Left ventricle myocardium superior (tissue), 1 donor: ENCODE measurements at regions of chr1 and their contacts with region 1.

Region 1: DNA sequence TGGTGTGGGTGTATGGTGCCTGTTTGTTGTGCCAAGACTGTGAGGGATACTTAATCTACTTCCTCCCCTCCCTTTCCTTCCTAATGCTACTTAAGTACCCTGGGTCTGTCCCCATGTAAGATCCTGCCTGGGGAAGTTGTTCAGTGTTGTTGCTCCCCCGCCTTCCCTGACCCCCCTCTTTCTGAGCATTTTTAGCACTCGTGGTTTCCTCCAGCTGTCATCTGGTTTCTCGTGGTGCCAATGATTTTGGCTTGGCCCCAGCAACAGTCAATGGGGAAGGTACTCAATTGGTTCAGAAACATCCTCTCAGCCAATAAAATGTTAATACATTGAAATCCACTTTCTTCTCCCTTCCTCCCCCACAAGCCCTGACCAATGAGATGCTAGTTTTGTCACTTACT is 8.0 kb upstream of the B4GALT3 start:
- DNase-seq: peak; percentile 73
- ATAC-seq: peak; percentile 86

Region 2: DNA sequence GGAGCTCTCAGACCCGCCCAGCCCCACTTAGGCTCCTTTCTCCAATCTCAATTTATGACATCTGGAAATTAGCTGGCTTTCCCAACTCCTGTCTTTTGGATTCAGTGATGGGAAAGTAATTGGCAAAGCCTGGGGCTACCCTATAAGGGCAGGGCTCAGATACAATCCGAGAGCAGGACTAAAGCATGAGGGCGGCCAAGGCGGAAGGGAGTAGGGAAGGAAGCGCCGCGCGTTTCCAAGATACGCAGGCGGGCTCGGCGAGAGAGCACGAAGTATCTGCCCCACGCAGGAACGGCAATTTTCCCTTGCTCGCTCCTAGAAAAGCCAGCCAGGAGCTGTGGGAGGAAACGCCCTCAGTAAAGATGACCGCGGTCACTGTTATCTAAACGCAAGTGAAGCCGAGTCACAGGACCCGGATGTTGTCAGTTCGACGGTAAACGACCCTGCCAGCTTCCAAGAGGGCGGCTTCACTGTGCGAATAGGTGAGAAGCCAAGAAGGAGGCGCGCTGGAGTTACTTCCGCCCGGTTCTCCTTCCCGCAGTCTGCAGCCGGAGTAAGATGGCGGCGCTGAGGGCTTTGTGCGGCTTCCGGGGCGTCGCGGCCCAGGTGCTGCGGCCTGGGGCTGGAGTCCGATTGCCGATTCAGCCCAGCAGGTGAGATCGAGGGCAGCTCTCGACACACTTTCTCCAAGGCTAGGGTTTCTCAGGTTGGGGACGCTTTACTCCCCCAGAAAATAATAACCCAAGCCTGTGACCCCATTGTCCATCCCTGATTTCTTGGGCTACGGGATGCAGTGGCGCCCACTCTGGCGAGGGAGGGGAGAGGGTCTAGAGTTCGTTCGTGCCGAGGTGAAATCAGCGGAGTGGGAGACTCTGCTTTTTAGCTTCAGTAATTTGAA is 16.8 kb after region 1 on chr1 and contains the start of gene NDUFS2:
- intact Hi-C with region 1: loop called (anchors 2 kb)
- DNase-seq: peak; percentile 97
- ATAC-seq: peak; percentile 84
- total RNA-seq, gene NDUFS2: 335 TPM